IMR-90 (cell line): ENCODE measurements at regions of chr20 and their contacts with region 1.

Region 1: GRCh38 chr20:59598625-59599310 is 5.6 kb upstream of the PHACTR3 start:
- DNase-seq: no peak
- ATAC-seq: no peak
- H3K4me3 ChIP-seq: no peak overlapping the region
- H3K27ac ChIP-seq: no peak overlapping the region
- H3K4me1 ChIP-seq: no peaks in the 10 kb centered on the region
- H3K27me3 ChIP-seq: no peaks in the 10 kb centered on the region; the same call in 1 of the 2 replicates
- CTCF ChIP-seq: peak; percentile 50
- POLR2A ChIP-seq: no peak
- RAD21 ChIP-seq: peak; percentile 46

Region 2: GRCh38 chr20:59547596-59547995 is 51.2 kb before region 1 on chr20:
- CTCF ChIA-PET with region 1: no interaction called
- POLR2A ChIA-PET with region 1: no interaction called
- dilution Hi-C with region 1: no loop called
- in situ Hi-C with region 1: no loop called
- intact Hi-C with region 1: loop called (anchors 2 kb)
- DNase-seq: no peak
- ATAC-seq: no peak
- H3K4me3 ChIP-seq: no peak overlapping the region
- H3K27ac ChIP-seq: no peak overlapping the region
- H3K4me1 ChIP-seq: no peaks in the 10 kb centered on the region
- H3K27me3 ChIP-seq: no peaks in the 10 kb centered on the region
- CTCF ChIP-seq: no peak
- POLR2A ChIP-seq: no peak
- RAD21 ChIP-seq: no peak

Region 3: GRCh38 chr20:60589627-60590026 is 990.9 kb after region 1 on chr20:
- CTCF ChIA-PET with region 1: no interaction called
- POLR2A ChIA-PET with region 1: no interaction called
- dilution Hi-C with region 1: no loop called
- in situ Hi-C with region 1: no loop called
- intact Hi-C with region 1: no loop called
- DNase-seq: peak; percentile 3
- ATAC-seq: no peak
- H3K4me3 ChIP-seq: no peak overlapping the region
- H3K27ac ChIP-seq: no peak overlapping the region
- H3K4me1 ChIP-seq: no peaks in the 10 kb centered on the region
- H3K27me3 ChIP-seq: no peaks in the 10 kb centered on the region
- CTCF ChIP-seq: no peak
- POLR2A ChIP-seq: no peak
- RAD21 ChIP-seq: no peak